ENCODE measurements at regions of chr17 and their contacts with region 1.

Region 1: GRCh38 chr17:61635913-61636432 is 45.0 kb upstream of the NACA2 start:
- DNase-seq: no peak
- H3K4me3 Mint-ChIP-seq: no peak overlapping the region
- H3K27ac Mint-ChIP-seq: no peak overlapping the region
- H3K4me1 Mint-ChIP-seq: peaks cover 11% of the 10 kb centered on the region
- H3K27me3 Mint-ChIP-seq: peaks cover 73% of the 10 kb centered on the region

Region 2: DNA sequence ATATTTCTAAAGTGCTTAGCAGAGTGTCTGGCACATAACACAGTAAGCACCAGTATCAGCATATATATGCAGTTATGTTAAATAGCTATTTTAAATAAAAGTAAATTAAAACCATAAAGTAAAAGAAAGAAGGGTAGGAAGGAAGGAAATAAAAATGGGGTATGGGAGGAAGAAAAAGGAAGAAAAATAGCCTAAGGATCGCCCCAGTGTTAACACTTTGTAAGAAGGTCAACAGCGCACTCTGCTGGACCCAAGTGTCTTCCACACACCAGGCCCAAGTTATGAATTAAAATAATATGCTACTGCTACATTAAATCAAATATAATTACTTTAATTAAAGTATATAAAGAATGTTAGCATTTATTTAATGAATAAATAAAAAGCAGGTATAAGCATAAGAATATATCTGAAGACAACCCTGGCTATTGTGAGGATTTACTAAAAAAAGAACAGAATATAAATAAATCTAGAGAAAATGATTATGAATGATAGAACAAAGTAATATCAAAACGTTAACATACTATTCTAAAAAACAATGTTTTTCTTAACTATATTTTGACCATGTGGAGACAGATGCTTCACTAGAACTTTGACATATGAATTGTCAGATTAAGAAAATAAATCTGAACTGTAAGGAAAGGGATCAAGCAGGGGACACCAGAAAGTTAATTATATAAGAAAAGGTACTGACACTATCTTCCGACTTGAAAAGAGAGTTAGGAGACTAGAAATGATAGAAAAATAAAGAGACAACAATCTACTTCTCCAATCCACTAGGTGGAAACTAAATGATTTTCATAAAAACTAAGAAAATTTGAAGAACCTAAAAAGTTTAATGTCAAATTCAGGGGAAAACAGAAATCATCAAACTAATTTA is 201.4 kb after region 1 on chr17:
- intact Hi-C with region 1: loop called (anchors 1 kb)
- DNase-seq: peak; percentile 19
- H3K4me3 Mint-ChIP-seq: no peak overlapping the region
- H3K27ac Mint-ChIP-seq: no peak overlapping the region
- H3K4me1 Mint-ChIP-seq: no peaks in the 10 kb centered on the region
- H3K27me3 Mint-ChIP-seq: no peaks in the 10 kb centered on the region